Breast epithelium (tissue), 4 donors: ENCODE measurements at regions of chr2 and their contacts with region 1.

Region 1: GRCh38 chr2:2260691-2261268 is 70.3 kb downstream of the MYT1L start:
- DNase-seq: no peak
- H3K4me3 ChIP-seq: no peak overlapping the region
- H3K27ac ChIP-seq: no peak overlapping the region
- H3K4me1 ChIP-seq: no peaks in the 10 kb centered on the region
- H3K27me3 ChIP-seq: no peaks in the 10 kb centered on the region
- CTCF ChIP-seq: no peak
- POLR2A ChIP-seq: no peak

Region 2: DNA sequence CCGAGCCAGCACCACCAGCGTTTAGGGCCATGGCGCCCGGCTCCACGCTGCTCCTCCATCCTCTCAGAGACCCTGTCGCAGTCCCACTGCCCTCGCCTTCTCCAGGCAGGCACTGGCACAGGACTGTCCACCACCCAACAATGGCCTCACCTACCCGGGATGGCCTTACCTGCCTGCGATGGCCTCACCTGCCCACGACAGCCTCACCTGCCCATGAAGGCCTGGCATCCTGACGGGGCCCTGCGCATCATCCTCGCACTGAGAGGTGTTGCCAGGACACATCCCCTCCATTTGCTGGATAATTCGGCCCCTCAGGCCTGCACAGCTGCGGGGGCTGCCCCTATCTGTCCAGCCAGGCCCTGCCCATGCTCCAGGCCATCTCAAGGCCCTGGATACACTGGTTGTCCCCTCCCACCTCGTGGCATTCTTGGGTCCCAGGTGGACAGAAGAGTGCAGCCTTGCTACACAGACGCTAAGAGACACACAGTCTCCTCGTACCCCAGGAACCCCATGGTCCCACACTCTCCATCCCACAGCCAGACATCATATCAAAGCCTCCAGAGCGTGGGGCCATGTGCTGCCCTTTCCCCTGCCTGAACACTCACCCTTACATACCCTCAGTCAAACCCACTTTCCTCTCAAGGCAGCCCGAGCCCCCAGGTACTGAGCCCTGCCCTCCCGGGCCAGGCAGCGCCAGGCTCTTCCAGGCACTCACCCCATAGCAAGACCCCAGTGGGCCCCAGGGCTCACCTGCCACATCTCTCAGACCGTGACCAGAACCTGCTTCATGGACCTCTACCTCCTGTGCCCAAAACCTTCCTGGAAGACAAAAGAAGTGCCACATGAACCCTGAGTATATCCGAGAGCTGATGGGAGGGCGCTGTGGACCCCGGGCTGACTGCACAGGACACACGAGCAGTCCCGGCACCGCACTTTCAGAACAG is 848.3 kb after region 1 on chr2:
- intact Hi-C with region 1: no loop called
- DNase-seq: no peak
- H3K4me3 ChIP-seq: no peak overlapping the region
- H3K27ac ChIP-seq: no peak overlapping the region
- H3K4me1 ChIP-seq: no peaks in the 10 kb centered on the region
- H3K27me3 ChIP-seq: no peaks in the 10 kb centered on the region
- CTCF ChIP-seq: no peak
- POLR2A ChIP-seq: no peak

Region 3: GRCh38 chr2:3430172-3430571 is 1169.4 kb after region 1 on chr2:
- intact Hi-C with region 1: loop called (anchors 10 kb)
- DNase-seq: no peak
- H3K4me3 ChIP-seq: no peak overlapping the region
- H3K27ac ChIP-seq: no peak overlapping the region
- H3K4me1 ChIP-seq: no peaks in the 10 kb centered on the region
- H3K27me3 ChIP-seq: no peaks in the 10 kb centered on the region
- CTCF ChIP-seq: no peak
- POLR2A ChIP-seq: no peak